ENCODE measurements at regions of chr9 and their contacts with region 1.

Region 1: DNA sequence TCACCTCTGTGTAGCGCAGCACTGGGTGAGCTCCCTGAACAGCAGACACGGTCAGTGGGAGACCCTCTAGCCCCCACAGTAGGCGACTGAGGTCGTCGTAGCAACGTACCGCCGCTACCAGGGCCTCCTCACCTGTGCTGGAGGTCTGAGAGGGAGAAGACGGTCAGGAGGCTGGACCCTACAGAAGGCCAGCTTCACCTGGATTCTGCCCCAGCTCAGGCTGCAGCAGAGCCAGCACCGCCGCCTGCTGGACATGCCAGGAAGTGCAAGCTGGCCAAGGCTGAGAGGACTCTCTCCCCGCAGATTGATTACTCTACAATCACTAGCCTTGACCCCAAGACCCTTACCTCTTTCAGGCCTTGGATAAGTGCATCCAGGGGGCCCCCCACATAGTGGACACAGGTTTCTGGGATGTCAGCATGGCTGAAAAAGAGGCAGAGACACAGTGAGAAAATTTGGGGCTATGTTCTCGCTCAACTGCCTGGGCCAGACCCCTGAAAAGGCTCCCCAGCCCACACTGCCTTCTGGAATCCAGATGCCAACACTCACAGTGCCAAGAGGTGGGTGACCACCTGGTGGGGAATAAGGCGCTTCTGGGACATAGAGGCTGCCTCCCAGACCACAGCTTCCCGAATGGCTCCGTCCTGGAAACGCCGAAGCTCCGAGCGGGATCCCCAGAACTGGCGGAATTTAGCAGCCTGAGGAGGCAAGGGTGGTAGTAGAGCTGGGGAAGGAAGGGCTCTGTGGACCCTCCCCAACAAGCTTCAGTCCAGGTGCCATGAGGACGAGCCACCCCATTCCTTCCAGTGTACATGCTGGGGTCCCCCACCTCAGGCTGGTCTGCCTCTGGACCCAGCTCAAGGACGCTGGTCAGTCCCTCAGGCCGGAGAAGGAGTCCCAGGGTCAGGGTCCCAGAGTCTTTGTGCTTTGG is 6.9 kb downstream of the NOL6 start:
- DNase-seq: peak; percentile 58 to 83
- ATAC-seq: peak; percentile 73 to 93 (median 82)
- H3K4me3 ChIP-seq: no peak overlapping the region
- H3K4me3 Mint-ChIP-seq: no peak overlapping the region
- H3K27ac ChIP-seq: no peak overlapping the region
- H3K27ac Mint-ChIP-seq: no peak overlapping the region
- H3K4me1 ChIP-seq: no peaks in the 10 kb centered on the region
- H3K4me1 Mint-ChIP-seq: peaks cover 6 to 8% of the 10 kb centered on the region in 2 donors
- H3K27me3 ChIP-seq: no peaks in the 10 kb centered on the region
- H3K27me3 Mint-ChIP-seq: no peaks in the 10 kb centered on the region
- CTCF ChIP-seq: peak; percentile 91

Region 2: DNA sequence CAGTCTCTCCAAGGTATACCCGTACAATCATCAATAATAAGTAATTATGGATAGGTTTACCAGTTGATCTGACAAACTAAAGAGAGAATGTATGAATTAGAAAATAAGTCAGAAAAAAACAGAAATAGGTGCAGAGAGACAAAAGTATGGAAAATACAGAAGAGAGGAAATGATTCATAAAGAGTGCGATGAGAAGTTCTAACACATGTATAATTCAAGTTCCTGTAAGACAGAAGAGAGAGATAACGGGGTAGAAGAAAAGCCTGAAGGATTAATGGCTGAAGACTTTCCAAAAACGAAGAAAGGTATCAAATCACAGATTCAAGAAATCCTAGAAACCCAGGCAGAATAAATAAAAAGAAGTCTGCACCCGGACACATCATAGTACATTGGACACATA is 374.2 kb before region 1 on chr9:
- intact Hi-C with region 1: no loop called
- DNase-seq: no peak
- ATAC-seq: peak in 1 of 3 donors; percentile 46
- H3K4me3 ChIP-seq: no peak overlapping the region
- H3K4me3 Mint-ChIP-seq: no peak overlapping the region
- H3K27ac ChIP-seq: no peak overlapping the region
- H3K27ac Mint-ChIP-seq: no peak overlapping the region
- H3K4me1 ChIP-seq: no peaks in the 10 kb centered on the region
- H3K4me1 Mint-ChIP-seq: peaks cover 10% of the 10 kb centered on the region in 2 donors
- H3K27me3 ChIP-seq: no peaks in the 10 kb centered on the region
- H3K27me3 Mint-ChIP-seq: no peaks in the 10 kb centered on the region
- CTCF ChIP-seq: no peak

Region 3: DNA sequence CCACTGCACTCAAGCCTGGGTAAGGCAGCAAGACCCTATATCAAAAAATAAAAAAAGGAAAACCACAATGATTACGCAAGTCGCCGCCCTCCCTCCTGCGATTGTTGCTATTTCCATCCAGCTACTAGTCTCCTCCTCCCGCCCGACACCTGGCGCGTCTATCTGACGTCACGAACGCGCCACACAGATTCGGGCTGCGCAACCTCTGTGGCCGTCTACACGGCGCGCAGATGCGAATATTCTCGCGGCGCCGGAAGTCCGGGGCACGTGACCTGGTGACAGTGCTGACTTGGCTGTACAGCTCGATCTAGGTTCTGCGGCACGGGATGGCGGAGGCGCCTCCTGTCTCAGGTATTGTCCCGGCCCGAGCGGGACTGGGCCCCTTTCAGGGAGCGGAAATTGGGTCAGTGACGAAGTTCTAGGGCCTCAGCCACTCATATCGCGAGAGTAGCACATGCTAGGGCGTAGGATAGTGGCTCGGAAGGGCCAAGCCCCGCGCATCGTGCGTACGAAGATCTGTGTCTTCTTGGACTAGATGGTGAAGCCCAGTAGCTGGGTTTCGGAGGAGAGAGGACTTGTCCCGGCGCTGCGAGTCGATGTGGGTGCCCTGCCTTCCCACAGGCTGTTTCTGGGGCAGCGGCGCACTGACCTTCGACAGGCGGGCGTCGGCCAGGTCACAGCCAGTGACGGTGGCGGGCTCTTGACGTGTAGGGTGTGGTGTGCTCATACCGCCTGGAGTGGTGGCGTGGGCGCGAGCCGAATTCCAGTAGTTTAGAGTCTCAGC is 176.4 kb before region 1 on chr9 and contains the start of gene NFX1:
- intact Hi-C with region 1: loop called (anchors 1 kb)
- DNase-seq: peak; percentile 98 to 100
- ATAC-seq: peak; percentile 73 to 94 (median 89)
- H3K4me3 ChIP-seq: peak within 1 kb of the TSS; percentile 82
- H3K4me3 Mint-ChIP-seq: peak within 1 kb of the TSS; percentile 99
- H3K27ac ChIP-seq: peak within 1 kb of the TSS; percentile 98
- H3K27ac Mint-ChIP-seq: peak within 1 kb of the TSS; percentile 100
- H3K4me1 ChIP-seq: peaks cover 34% of the 10 kb centered on the region
- H3K4me1 Mint-ChIP-seq: peaks cover 41 to 42% of the 10 kb centered on the region in 2 donors
- H3K27me3 ChIP-seq: no peaks in the 10 kb centered on the region
- H3K27me3 Mint-ChIP-seq: peaks cover 0 to 3% of the 10 kb centered on the region in 2 donors
- CTCF ChIP-seq: no peak
- total RNA-seq, gene NFX1: 33.0 to 38.8 (median 38.5) TPM

Region 4: GRCh38 chr9:33374634-33375213 is 92.1 kb before region 1 on chr9:
- intact Hi-C with region 1: loop called (anchors 2 kb)
- DNase-seq: peak in 1 of 2 donors; percentile 82
- ATAC-seq: peak; percentile 80 to 98 (median 95)
- H3K4me3 ChIP-seq: no peak overlapping the region
- H3K4me3 Mint-ChIP-seq: peak overlapping the region; percentile 52
- H3K27ac ChIP-seq: no peak overlapping the region
- H3K27ac Mint-ChIP-seq: no peak overlapping the region
- H3K4me1 ChIP-seq: no peaks in the 10 kb centered on the region
- H3K4me1 Mint-ChIP-seq: peaks cover 8 to 9% of the 10 kb centered on the region in 2 donors
- H3K27me3 ChIP-seq: no peaks in the 10 kb centered on the region
- H3K27me3 Mint-ChIP-seq: no peaks in the 10 kb centered on the region
- CTCF ChIP-seq: peak; percentile 80

Region 5: DNA sequence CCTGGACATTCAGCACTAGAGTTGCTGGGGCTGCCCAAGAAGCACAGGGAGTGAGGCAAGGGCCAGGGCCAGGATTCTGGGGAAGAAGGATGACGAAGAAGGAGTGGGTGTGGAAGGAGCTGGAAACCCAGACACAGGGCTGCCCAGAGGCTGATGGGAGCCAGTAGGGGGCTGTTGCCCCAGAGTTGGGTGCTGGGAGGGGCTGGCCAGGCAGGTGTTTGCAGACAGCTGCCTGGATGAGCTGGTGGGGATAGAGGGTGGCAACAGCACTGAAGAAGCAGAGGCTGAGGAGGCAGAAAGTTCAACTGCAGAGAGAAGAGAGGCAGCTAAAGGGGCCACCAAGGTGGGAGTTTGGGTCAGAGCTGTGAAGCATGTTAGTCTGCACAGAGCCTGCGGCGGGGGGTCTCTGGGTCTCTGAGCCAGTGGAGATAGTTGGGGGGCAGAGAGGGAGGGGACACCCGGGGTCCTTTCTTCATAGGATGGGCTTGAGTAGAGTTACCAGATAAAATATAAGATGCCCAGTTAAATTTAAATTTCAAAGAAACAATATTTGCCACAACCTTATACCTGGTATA is 62.0 kb before region 1 on chr9:
- intact Hi-C with region 1: loop called (anchors 10 kb)
- DNase-seq: no peak
- ATAC-seq: no peak
- H3K4me3 ChIP-seq: no peak overlapping the region
- H3K4me3 Mint-ChIP-seq: no peak overlapping the region
- H3K27ac ChIP-seq: no peak overlapping the region
- H3K27ac Mint-ChIP-seq: no peak overlapping the region
- H3K4me1 ChIP-seq: no peaks in the 10 kb centered on the region
- H3K4me1 Mint-ChIP-seq: no peaks in the 10 kb centered on the region
- H3K27me3 ChIP-seq: no peaks in the 10 kb centered on the region
- H3K27me3 Mint-ChIP-seq: peaks cover 0 to 6% of the 10 kb centered on the region in 2 donors
- CTCF ChIP-seq: no peak

Measured in natural killer cell (primary cell).